ENCODE measurements at regions of chr15 and their contacts with region 1.

Region 1: GRCh38 chr15:79380755-79381497 is 51.2 kb upstream of the MINAR1 start:
- DNase-seq: peak; percentile 88
- H3K4me3 ChIP-seq: no peak overlapping the region
- H3K27ac ChIP-seq: no peak overlapping the region
- H3K4me1 ChIP-seq: peaks cover 0 to 6% (median 0%) of the 10 kb centered on the region in 6 donors
- H3K27me3 ChIP-seq: no peaks in the 10 kb centered on the region
- CTCF ChIP-seq: peak; percentile 57 to 93 (median 83)
- POLR2A ChIP-seq: no peak

Region 2: GRCh38 chr15:79430901-79431635 is 50.1 kb after region 1 on chr15:
- intact Hi-C with region 1: no loop called
- DNase-seq: no peak
- H3K4me3 ChIP-seq: peak overlapping the region in 6 of 8 donors; percentile 38 to 66 (median 40)
- H3K27ac ChIP-seq: no peak overlapping the region
- H3K4me1 ChIP-seq: peaks cover 12 to 26% (median 20%) of the 10 kb centered on the region in 6 donors
- H3K27me3 ChIP-seq: peaks cover 0 to 84% (median 47%) of the 10 kb centered on the region in 7 donors
- CTCF ChIP-seq: no peak
- POLR2A ChIP-seq: no peak

Region 3: GRCh38 chr15:79596051-79596507 is 215.2 kb after region 1 on chr15:
- intact Hi-C with region 1: loop called (anchors 5 kb)
- DNase-seq: peak; percentile 74
- H3K4me3 ChIP-seq: no peak overlapping the region
- H3K27ac ChIP-seq: no peak overlapping the region
- H3K4me1 ChIP-seq: no peaks in the 10 kb centered on the region
- H3K27me3 ChIP-seq: peaks cover 0 to 20% (median 0%) of the 10 kb centered on the region in 7 donors
- CTCF ChIP-seq: peak; percentile 53 to 90 (median 76)
- POLR2A ChIP-seq: no peak

Region 4: DNA sequence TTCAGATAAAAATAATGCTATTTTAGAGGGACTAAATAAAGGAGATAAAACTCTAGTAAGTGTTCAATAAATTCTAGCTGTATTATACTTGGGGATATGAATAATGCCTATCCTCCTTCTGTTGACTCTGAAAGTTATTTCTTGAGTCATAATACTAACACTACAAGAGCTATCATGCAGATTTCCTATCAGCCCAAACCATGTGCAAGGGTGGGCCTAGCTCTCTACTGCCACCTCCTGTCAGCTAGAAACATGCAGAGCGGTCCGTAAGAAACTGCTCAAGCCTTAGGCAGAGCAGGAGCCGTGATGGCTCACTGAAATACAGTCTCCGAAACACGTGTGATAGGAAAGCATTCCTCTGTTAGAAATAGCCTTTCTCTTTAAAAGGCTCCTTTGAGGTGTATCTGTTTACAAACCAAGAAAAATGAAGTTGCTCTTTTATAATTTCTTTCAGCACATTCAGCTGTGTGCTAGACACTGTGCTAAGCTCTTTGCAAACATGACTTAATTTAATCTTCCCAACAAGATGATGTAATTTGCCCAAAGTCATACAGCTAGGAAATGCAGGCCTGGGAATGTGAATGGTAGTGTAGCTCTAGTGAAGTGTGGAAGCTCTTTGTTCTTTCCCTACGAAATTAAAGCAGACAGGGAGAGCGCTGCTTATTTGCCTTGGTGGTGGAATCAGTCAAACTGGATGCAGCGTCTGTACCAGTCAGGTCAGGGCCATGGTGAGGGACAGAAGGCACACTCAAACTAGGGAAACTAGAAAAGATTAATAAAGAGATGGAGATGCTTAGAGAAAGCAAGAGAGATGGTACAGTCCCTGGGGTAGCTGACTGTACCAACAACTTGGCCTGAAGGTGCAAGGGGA is 472.8 kb after region 1 on chr15:
- intact Hi-C with region 1: loop called (anchors 2 kb)
- DNase-seq: peak; percentile 77
- H3K4me3 ChIP-seq: no peak overlapping the region
- H3K27ac ChIP-seq: no peak overlapping the region
- H3K4me1 ChIP-seq: peaks cover 0 to 12% (median 0%) of the 10 kb centered on the region in 6 donors
- H3K27me3 ChIP-seq: no peaks in the 10 kb centered on the region
- CTCF ChIP-seq: peak; percentile 47 to 92 (median 81)
- POLR2A ChIP-seq: no peak

Region 5: GRCh38 chr15:80173022-80173759 is 792.3 kb after region 1 on chr15:
- intact Hi-C with region 1: loop called (anchors 5 kb)
- DNase-seq: peak; percentile 89
- H3K4me3 ChIP-seq: no peak overlapping the region
- H3K27ac ChIP-seq: no peak overlapping the region
- H3K4me1 ChIP-seq: peaks cover 0 to 3% (median 0%) of the 10 kb centered on the region in 6 donors
- H3K27me3 ChIP-seq: no peaks in the 10 kb centered on the region
- CTCF ChIP-seq: peak; percentile 59 to 93 (median 82)
- POLR2A ChIP-seq: no peak

Measured in spleen (tissue), 13 donors.